ENCODE measurements at regions of chr17 and their contacts with region 1.

Region 1: GRCh38 chr17:50707289-50708049 is at the start of gene ANKRD40:
- DNase-seq: peak; percentile 95
- ATAC-seq: peak; percentile 78
- H3K4me3 ChIP-seq: peak within 1 kb of the TSS; percentile 57 to 87 (median 80)
- H3K4me3 Mint-ChIP-seq: peak within 1 kb of the TSS; percentile 96
- H3K27ac ChIP-seq: peak within 1 kb of the TSS; percentile 92 to 99
- H3K27ac Mint-ChIP-seq: peak within 1 kb of the TSS; percentile 97
- H3K4me1 ChIP-seq: peaks cover 25 to 30% of the 10 kb centered on the region in 2 donors
- H3K4me1 Mint-ChIP-seq: peaks cover 43% of the 10 kb centered on the region
- H3K27me3 ChIP-seq: no peaks in the 10 kb centered on the region
- H3K27me3 Mint-ChIP-seq: no peaks in the 10 kb centered on the region
- CTCF ChIP-seq: no peak
- total RNA-seq, gene ANKRD40: 35.3 and 43.1 TPM in 2 replicates

Region 2: DNA sequence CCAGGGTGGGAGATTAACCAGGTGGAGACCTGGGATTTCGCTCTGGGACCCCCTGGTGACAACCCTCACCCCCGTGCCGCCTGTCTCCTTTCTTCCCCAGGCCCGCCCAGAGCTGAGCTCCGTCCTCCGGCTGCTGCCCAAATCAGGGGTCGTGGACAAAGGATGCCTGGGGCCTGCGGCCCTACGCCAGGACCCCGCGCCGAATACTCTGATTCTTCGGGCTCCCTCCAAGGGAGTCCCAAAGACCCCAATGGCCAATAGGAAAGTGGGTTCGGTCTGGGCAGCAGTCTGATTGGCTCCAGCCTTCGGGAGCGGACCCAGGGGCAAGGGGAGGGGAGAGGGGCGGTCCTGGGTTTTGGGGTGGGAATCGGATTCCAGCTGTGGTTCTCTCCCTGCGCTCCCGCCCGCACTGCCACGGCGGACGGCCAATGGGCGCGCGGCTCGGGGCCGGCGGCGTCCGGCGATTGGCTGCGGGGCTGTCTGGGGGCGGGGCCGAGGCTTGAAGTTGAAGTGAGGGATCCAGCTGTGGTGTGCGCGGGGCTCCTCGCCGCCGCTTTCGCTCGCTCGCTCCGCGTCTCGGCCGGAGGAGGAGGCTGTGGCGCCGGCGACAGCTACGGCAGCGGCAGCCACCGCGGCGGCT is 147.2 kb before region 1 on chr17 and contains the start of gene CACNA1G:
- CTCF ChIA-PET with region 1: no interaction called
- POLR2A ChIA-PET with region 1: no interaction called
- intact Hi-C with region 1: loop called (anchors 5 kb)
- DNase-seq: peak; percentile 90
- ATAC-seq: peak; percentile 89
- H3K4me3 ChIP-seq: peak within 1 kb of the TSS in 4 of 5 experiments; percentile 43 to 70 (median 60)
- H3K4me3 Mint-ChIP-seq: peak within 1 kb of the TSS; percentile 87
- H3K27ac ChIP-seq: no peak within 1 kb of the TSS
- H3K27ac Mint-ChIP-seq: no peak within 1 kb of the TSS
- H3K4me1 ChIP-seq: peaks cover 34 to 40% of the 10 kb centered on the region in 2 donors
- H3K4me1 Mint-ChIP-seq: peaks cover 30% of the 10 kb centered on the region
- H3K27me3 ChIP-seq: peaks cover 0 to 85% (median 37%) of the 10 kb centered on the region in 4 experiments
- H3K27me3 Mint-ChIP-seq: peaks cover 29% of the 10 kb centered on the region
- CTCF ChIP-seq: no peak
- total RNA-seq, gene CACNA1G: 0.05 and 0.12 TPM in 2 replicates

Region 3: GRCh38 chr17:50575581-50576210 is 131.8 kb before region 1 on chr17:
- CTCF ChIA-PET with region 1: no interaction called
- POLR2A ChIA-PET with region 1: no interaction called
- intact Hi-C with region 1: no loop called
- DNase-seq: no peak
- ATAC-seq: no peak
- H3K4me3 ChIP-seq: no peak overlapping the region
- H3K4me3 Mint-ChIP-seq: no peak overlapping the region
- H3K27ac ChIP-seq: no peak overlapping the region
- H3K27ac Mint-ChIP-seq: no peak overlapping the region
- H3K4me1 ChIP-seq: no peaks in the 10 kb centered on the region
- H3K4me1 Mint-ChIP-seq: no peaks in the 10 kb centered on the region
- H3K27me3 ChIP-seq: peaks cover 0 to 8% (median 0%) of the 10 kb centered on the region in 4 experiments
- H3K27me3 Mint-ChIP-seq: peaks cover 33% of the 10 kb centered on the region
- CTCF ChIP-seq: no peak

Region 4: GRCh38 chr17:50719144-50719923 is 11.9 kb after region 1 on chr17 and contains the start of gene LUC7L3:
- CTCF ChIA-PET with region 1: interaction called, 4 read pairs
- POLR2A ChIA-PET with region 1: interaction called, 14 read pairs
- intact Hi-C with region 1: loop called (anchors 1 kb)
- DNase-seq: peak; percentile 96
- ATAC-seq: peak; percentile 93
- H3K4me3 ChIP-seq: peak within 1 kb of the TSS; percentile 75 to 97 (median 87)
- H3K4me3 Mint-ChIP-seq: peak within 1 kb of the TSS; percentile 98
- H3K27ac ChIP-seq: peak within 1 kb of the TSS; percentile 96 to 97
- H3K27ac Mint-ChIP-seq: peak within 1 kb of the TSS; percentile 99
- H3K4me1 ChIP-seq: peaks cover 31 to 32% of the 10 kb centered on the region in 2 donors
- H3K4me1 Mint-ChIP-seq: peaks cover 36% of the 10 kb centered on the region
- H3K27me3 ChIP-seq: no peaks in the 10 kb centered on the region
- H3K27me3 Mint-ChIP-seq: no peaks in the 10 kb centered on the region
- CTCF ChIP-seq: no peak
- total RNA-seq, gene LUC7L3: 305 and 311 TPM in 2 replicates

Region 5: DNA sequence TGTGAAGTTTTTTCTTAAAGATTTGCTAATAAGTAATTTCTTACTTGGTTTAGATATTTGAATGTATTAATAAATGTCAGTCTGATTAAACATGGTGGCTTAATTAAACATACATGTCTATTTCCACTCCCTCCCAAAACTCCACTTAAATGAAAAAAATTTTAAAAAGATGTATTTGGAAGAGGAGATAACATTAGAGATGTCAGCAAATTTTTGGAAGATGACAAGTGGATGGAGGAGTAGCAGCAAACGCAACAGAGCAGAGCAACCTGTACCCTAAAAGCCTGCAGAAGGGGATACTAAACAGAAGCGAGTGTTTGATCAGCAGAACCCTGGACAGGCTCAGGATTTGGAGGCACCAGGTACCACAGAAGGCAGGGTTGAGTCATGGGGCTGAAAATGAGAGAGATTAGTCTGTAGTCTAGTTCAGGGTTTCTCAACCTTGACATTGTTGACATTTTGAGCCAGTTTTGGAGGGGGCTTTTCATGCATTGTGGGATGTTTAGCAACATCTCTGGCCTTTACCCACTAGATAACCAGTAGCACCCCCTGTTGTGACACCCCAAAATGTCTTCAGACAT is 29.7 kb after region 1 on chr17:
- CTCF ChIA-PET with region 1: no interaction called
- POLR2A ChIA-PET with region 1: no interaction called
- intact Hi-C with region 1: no loop called
- DNase-seq: no peak
- ATAC-seq: no peak
- H3K4me3 ChIP-seq: no peak overlapping the region
- H3K4me3 Mint-ChIP-seq: no peak overlapping the region
- H3K27ac ChIP-seq: no peak overlapping the region
- H3K27ac Mint-ChIP-seq: no peak overlapping the region
- H3K4me1 ChIP-seq: no peaks in the 10 kb centered on the region
- H3K4me1 Mint-ChIP-seq: peaks cover 18% of the 10 kb centered on the region
- H3K27me3 ChIP-seq: no peaks in the 10 kb centered on the region
- H3K27me3 Mint-ChIP-seq: no peaks in the 10 kb centered on the region
- CTCF ChIP-seq: no peak

Measured in B cell (primary cell).